GM10248 (cell line): ENCODE measurements at regions of chr7 and their contacts with region 1.

Region 1: GRCh38 chr7:132980412-132980811 is 101.5 kb downstream of the CHCHD3 start:
- DNase-seq: no peak
- CTCF ChIP-seq: no peak

Region 2: DNA sequence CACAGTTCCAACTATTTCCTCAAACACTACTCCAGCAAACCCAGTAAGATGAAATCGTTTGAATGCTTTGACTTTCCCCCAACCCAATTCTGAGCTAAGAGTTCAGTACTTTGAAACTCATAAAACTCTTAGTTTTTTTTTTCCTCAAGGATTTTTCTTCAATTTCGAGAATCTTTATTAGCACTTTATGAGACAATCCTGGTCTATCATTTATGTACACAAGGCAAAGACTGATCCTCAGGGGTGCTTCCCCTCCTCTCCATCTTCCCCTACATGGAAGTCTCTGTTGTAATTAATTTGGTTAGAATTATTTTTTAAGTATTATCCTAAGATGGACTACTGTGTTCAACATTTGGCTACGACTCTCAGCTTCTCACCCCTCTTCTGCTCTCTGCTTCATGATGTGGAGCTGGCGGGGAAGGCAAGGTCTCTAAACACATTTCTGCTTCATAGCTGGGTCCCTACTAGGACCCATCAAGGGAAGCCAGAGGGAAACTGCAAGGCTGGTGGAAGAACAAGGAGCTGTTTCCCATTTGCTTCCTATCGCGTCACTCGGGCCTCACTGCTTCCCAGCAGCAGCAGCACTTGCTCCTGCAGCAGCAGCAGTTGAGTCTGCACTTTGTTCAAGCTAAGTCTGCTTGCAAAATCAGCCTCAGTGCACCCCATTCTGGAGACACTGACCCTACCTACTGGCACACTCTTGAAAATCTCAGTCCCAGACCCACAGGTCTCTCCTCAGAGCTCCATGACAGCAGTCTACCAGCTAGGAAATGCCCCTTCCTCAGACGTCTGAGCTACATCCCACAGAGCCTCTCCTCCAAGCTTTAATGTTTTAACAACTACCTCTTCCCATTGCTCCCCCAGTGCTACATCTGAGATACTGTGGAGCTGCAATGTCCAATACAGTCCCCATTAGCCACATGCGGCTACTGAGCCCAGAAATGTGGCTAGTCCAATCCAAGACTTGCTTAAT is 11.5 kb after region 1 on chr7:
- CTCF ChIA-PET with region 1: interaction called, 10 read pairs
- POLR2A ChIA-PET with region 1: no interaction called
- DNase-seq: no peak
- CTCF ChIP-seq: no peak